Endothelial cell of umbilical vein (primary cell): ENCODE measurements at regions of chr3 and their contacts with region 1.

Region 1: GRCh38 chr3:42473083-42473932 is 29.1 kb upstream of the VIPR1 start:
- DNase-seq: peak; percentile 92
- H3K4me3 ChIP-seq: peak overlapping the region in 1 of 3 experiments; percentile 2
- H3K27ac ChIP-seq: peak overlapping the region; percentile 89
- H3K4me1 ChIP-seq: peaks cover 32% of the 10 kb centered on the region
- H3K27me3 ChIP-seq: no peaks in the 10 kb centered on the region
- CTCF ChIP-seq: no peak
- POLR2A ChIP-seq: no peak

Region 2: DNA sequence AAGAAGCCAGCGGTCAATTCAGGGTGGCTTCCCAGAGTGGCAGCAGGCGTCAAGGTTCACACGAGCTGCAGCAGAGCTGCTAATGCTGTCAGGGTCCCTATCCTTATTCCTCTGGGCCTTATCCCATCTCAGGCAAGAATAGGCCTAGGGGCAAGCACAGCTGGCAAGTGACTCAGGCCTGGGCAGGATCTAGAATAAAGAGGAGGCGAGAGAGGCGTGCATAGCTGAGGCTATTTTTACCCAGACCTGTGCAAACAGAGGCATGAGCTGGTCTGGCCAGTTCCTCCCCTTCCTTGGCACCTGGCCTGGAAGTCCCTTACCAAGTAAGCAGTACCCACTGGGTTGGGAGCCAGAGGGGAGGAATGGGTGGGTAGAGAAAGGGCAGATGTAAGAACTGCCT is 16.9 kb after region 1 on chr3:
- CTCF ChIA-PET with region 1: interaction called, 11 read pairs
- POLR2A ChIA-PET with region 1: interaction called, 5 read pairs
- dilution Hi-C with region 1: no loop called
- intact Hi-C with region 1: loop called (anchors 1 kb)
- DNase-seq: peak; percentile 83
- H3K4me3 ChIP-seq: no peak overlapping the region
- H3K27ac ChIP-seq: peak overlapping the region; percentile 58
- H3K4me1 ChIP-seq: peaks cover 15% of the 10 kb centered on the region
- H3K27me3 ChIP-seq: peaks cover 0 to 2% of the 10 kb centered on the region in 2 experiments
- CTCF ChIP-seq: no peak
- POLR2A ChIP-seq: no peak